ENCODE measurements at regions of chr17 and their contacts with region 1.

Region 1: GRCh38 chr17:49063652-49064051 is 66.5 kb downstream of the IGF2BP1 start:
- DNase-seq: no peak
- ATAC-seq: peak; percentile 49
- H3K4me3 ChIP-seq: no peak overlapping the region
- H3K27ac ChIP-seq: no peak overlapping the region
- H3K4me1 ChIP-seq: no peaks in the 10 kb centered on the region
- H3K27me3 ChIP-seq: no peaks in the 10 kb centered on the region
- CTCF ChIP-seq: no peak
- POLR2A ChIP-seq: no peak
- RAD21 ChIP-seq: no peak

Region 2: DNA sequence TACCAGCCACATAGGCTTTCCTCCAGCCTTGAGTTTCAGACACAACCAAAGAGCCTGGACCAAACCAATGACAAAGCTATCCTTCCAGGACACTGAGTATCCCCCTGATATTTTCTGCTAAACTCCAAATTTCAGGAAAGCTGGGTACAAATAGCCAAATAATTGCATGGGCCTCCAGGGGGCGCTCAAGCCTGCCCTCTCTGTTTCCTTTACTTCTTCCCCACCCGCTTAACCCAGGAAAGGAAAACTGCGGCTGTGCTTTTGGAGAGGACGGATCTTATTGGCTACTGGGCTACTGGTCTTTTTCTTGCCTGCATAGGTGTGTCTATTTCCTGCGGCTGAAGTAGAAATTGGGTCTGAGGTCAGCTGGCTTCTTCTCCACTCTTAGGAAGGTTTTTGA is 116.7 kb after region 1 on chr17:
- CTCF ChIA-PET with region 1: no interaction called
- POLR2A ChIA-PET with region 1: no interaction called
- dilution Hi-C with region 1: no loop called
- in situ Hi-C with region 1: no loop called
- intact Hi-C with region 1: loop called (anchors 10 kb)
- DNase-seq: peak; percentile 36
- ATAC-seq: peak; percentile 85
- H3K4me3 ChIP-seq: no peak overlapping the region
- H3K27ac ChIP-seq: no peak overlapping the region
- H3K4me1 ChIP-seq: no peaks in the 10 kb centered on the region
- H3K27me3 ChIP-seq: peaks cover 2% of the 10 kb centered on the region
- CTCF ChIP-seq: peak; percentile 81
- POLR2A ChIP-seq: no peak
- RAD21 ChIP-seq: peak; percentile 75

Measured in IMR-90 (cell line).